Esophagus muscularis mucosa (tissue), 4 donors: ENCODE measurements at regions of chr19 and their contacts with region 1.

Region 1: DNA sequence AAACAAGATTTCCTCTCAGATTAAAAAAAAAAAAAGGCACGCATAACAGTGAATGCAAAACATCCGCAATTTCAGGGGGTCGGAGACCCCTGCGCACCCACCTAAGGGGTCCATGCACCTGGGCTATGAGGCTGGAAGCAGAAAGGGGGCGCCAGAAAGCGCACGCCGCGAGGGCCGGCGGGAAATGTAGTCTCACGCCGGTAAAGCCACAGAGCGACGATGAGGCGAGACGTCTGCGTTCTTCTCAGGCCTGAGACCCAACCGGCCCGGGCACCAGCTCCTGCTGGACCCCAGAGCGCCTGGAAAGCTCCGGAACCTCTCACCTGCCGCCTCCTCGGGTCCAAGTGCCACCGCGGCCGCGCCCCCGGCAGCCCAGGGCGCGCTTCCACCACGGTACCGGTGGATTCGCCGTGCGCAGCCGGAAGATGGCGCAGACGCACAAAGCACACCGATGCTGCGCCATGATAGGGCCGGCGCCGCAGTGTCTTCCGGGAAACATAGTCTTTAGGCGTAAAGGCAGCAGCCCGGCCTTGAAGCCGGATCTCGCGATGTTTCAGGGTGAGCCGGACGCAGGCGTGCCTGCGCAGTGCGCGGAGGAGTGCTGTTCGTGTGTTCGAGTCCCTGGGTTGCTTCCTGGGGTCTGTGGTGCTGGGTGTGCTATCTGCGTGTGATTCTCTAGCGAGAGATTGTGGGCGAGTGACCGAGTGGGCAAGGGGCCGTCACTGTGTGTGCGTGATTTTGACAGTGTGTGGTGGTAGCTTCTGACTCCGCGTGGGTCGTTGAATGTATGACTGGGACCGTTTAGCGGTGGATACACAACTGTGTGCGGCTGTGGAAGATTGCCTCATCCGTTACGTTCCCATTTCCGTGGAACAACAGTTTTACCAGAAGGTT is at the start of gene ZNF582:
- DNase-seq: peak; percentile 97
- H3K4me3 ChIP-seq: peak within 1 kb of the TSS; percentile 66 to 84 (median 75)
- H3K27ac ChIP-seq: peak within 1 kb of the TSS; percentile 86 to 95 (median 92)
- H3K4me1 ChIP-seq: peaks cover 7 to 15% (median 11%) of the 10 kb centered on the region in 4 donors
- H3K27me3 ChIP-seq: no peaks in the 10 kb centered on the region
- CTCF ChIP-seq: peak; percentile 74 to 80 (median 74)
- EP300 ChIP-seq: no peak
- POLR2A ChIP-seq: no peak
- total RNA-seq, gene ZNF582: 4.1 to 5.5 (median 4.8) TPM

Region 2: DNA sequence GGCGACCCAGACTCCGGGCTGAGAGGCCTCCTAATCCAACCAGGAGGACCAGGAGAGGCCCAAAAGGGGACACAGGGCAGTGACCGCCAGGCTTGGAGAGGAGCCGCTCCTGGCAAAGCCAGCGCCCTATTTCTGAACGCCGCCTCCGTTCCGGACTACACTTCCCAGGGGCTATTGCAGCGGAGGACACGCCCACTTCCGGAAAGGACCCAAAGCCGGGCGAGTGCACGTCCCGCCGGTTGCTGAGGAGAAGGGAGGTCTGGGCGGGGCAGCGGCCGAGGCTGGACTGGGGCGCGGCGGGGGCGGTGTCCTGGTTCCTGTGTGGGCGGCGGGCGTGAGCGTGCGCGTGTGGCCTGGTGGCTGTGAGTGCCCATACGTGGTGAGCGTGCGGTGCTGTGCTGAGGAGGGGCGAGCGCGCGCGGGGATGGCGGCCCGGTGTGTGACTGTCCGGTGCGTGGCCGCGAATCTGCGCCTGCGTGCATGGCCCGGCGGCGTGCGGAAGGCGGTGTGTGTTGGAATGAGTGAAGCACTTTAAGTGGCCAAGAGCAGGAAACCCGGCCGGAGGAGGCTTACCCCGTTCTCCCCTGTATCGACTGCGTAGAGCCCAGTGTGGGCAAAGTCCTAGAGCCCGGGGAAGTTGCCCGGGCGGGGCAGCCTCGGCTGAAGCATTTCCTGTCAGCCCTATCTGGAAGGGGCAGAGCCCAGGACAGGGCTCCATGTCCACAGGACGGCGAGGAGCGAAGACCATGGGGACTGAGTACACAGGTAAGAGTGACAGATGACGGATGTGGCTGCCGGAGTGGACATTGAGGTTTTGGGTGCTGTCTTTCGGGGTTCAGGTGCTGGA is 174.1 kb after region 1 on chr19 and contains the start of gene ZNF470:
- intact Hi-C with region 1: loop called (anchors 10 kb)
- DNase-seq: peak; percentile 99
- H3K4me3 ChIP-seq: peak within 1 kb of the TSS; percentile 71 to 93 (median 84)
- H3K27ac ChIP-seq: peak within 1 kb of the TSS; percentile 81 to 94 (median 86)
- H3K4me1 ChIP-seq: peaks cover 8 to 21% (median 20%) of the 10 kb centered on the region in 4 donors
- H3K27me3 ChIP-seq: peaks cover 0 to 4% (median 0%) of the 10 kb centered on the region in 4 donors
- CTCF ChIP-seq: no peak
- EP300 ChIP-seq: no peak
- POLR2A ChIP-seq: no peak
- total RNA-seq, gene ZNF470: 7.1 to 9.2 (median 7.4) TPM

Region 3: GRCh38 chr19:56611288-56611687 is 217.9 kb after region 1 on chr19:
- intact Hi-C with region 1: no loop called
- DNase-seq: no peak
- H3K4me3 ChIP-seq: no peak overlapping the region
- H3K27ac ChIP-seq: no peak overlapping the region
- H3K4me1 ChIP-seq: peaks cover 0 to 4% (median 0%) of the 10 kb centered on the region in 4 donors
- H3K27me3 ChIP-seq: no peaks in the 10 kb centered on the region
- CTCF ChIP-seq: no peak
- EP300 ChIP-seq: no peak
- POLR2A ChIP-seq: no peak